Mammary epithelial cell (primary cell): ENCODE measurements at regions of chr20 and their contacts with region 1.

Region 1: GRCh38 chr20:54041336-54041735 is 29.1 kb downstream of the BCAS1 start:
- DNase-seq: no peak
- H3K4me3 ChIP-seq: no peak overlapping the region
- H3K27ac ChIP-seq: no peak overlapping the region
- H3K4me1 ChIP-seq: no peaks in the 10 kb centered on the region
- H3K27me3 ChIP-seq: no peaks in the 10 kb centered on the region
- CTCF ChIP-seq: no peak

Region 2: DNA sequence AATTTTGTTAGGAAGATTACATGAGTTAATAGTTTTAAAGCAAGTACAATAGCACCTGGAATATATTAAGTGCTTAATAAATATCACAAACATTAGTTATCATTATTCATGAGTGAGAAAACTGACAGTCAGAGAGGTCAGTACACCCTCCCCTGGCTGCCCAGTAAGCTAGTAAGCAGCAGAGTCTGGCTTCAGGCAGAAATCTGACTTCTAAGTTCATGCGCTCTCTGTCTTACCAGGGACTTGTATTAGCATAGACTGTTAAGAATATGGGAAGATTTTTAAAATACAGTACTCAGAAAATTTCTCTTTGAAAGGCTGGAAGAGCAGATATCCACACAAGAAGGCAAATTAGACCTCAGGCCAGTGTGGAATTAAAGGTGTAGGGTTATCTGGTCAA is 11.7 kb before region 1 on chr20:
- CTCF ChIA-PET with region 1: no interaction called
- dilution Hi-C with region 1: no loop called
- in situ Hi-C with region 1: no loop called
- intact Hi-C with region 1: loop called (anchors 1 kb)
- DNase-seq: no peak
- H3K4me3 ChIP-seq: no peak overlapping the region
- H3K27ac ChIP-seq: no peak overlapping the region
- H3K4me1 ChIP-seq: no peaks in the 10 kb centered on the region
- H3K27me3 ChIP-seq: no peaks in the 10 kb centered on the region
- CTCF ChIP-seq: no peak